Aorta (tissue), 5 donors: ENCODE measurements at regions of chr2 and their contacts with region 1.

Region 1: GRCh38 chr2:65040400-65041261 is 15.6 kb upstream of the CEP68 start:
- DNase-seq: peak; percentile 90 to 92
- ATAC-seq: peak; percentile 96
- H3K4me3 ChIP-seq: no peak overlapping the region
- H3K27ac ChIP-seq: no peak overlapping the region
- H3K4me1 ChIP-seq: no peaks in the 10 kb centered on the region
- H3K27me3 ChIP-seq: no peaks in the 10 kb centered on the region

Region 2: GRCh38 chr2:64914735-64915509 is 125.7 kb before region 1 on chr2:
- intact Hi-C with region 1: loop called (anchors 1 kb)
- DNase-seq: no peak
- ATAC-seq: no peak
- H3K4me3 ChIP-seq: no peak overlapping the region
- H3K27ac ChIP-seq: no peak overlapping the region
- H3K4me1 ChIP-seq: no peaks in the 10 kb centered on the region
- H3K27me3 ChIP-seq: no peaks in the 10 kb centered on the region

Region 3: DNA sequence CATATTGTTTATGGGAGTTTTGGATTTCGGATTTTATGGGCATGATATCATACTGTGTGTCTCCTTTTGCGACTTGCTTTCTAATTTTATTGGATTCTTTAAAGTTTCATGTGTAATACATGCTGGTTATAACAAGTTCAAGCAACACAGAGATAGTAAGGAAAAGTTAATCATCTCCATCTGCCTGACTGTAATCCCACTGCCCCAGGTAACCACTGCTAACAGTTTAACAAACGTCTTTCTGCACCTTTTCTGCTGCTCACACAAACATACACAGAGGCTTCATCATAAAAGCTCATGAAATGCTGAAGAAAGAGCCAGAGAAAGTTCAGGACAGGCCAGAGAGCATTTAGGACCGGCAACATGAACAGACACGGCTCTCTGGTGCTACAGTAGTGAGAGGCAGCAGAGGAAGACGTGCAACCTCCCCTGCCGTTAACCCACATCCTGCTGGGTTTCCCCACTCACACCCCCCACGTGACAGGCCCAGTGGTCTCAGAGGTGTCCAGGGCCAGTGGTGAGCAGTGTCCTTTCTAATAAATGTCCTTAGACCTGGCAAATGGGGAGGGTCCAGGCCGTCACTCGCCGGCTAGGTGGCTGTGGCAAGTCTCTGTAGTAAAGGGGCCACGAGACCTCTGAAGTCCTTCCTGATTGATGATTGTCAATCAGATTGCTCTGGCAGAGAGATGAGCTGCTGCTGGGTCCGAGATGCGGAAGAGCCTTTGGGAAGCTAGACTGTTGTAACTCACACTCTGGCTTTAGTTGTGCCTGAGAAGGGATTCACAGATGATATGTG is 94.5 kb before region 1 on chr2:
- intact Hi-C with region 1: no loop called
- DNase-seq: peak in 1 of 2 donors; percentile 63
- ATAC-seq: no peak
- H3K4me3 ChIP-seq: no peak overlapping the region
- H3K27ac ChIP-seq: no peak overlapping the region
- H3K4me1 ChIP-seq: no peaks in the 10 kb centered on the region
- H3K27me3 ChIP-seq: no peaks in the 10 kb centered on the region

Region 4: GRCh38 chr2:65075605-65076344 is 35.1 kb after region 1 on chr2:
- intact Hi-C with region 1: no loop called
- DNase-seq: peak in 1 of 2 donors; percentile 59
- ATAC-seq: peak; percentile 60
- H3K4me3 ChIP-seq: no peak overlapping the region
- H3K27ac ChIP-seq: peak overlapping the region in 1 of 2 donors; percentile 66
- H3K4me1 ChIP-seq: peaks cover 0 to 1% of the 10 kb centered on the region in 2 donors
- H3K27me3 ChIP-seq: no peaks in the 10 kb centered on the region